Common myeloid progenitor, CD34-positive (primary cell): ENCODE measurements at regions of chr10 and their contacts with region 1.

Region 1: GRCh38 chr10:28381903-28382347 is 79.1 kb upstream of the MPP7 start:
- DNase-seq: peak; percentile 93 to 97 (median 96)
- H3K4me3 ChIP-seq: no peak overlapping the region
- H3K27ac ChIP-seq: no peak overlapping the region
- H3K4me1 ChIP-seq: peaks cover 0 to 9% (median 2%) of the 10 kb centered on the region in 4 experiments
- H3K27me3 ChIP-seq: no peaks in the 10 kb centered on the region

Region 2: GRCh38 chr10:28250782-28251181 is 131.1 kb before region 1 on chr10:
- CTCF ChIA-PET with region 1: interaction called, 72 read pairs
- POLR2A ChIA-PET with region 1: no interaction called
- DNase-seq: peak; percentile 25 to 51 (median 27)
- H3K4me3 ChIP-seq: no peak overlapping the region
- H3K27ac ChIP-seq: no peak overlapping the region
- H3K4me1 ChIP-seq: peaks cover 11 to 19% (median 14%) of the 10 kb centered on the region in 4 experiments
- H3K27me3 ChIP-seq: no peaks in the 10 kb centered on the region

Region 3: GRCh38 chr10:28326516-28327490 is 55.1 kb before region 1 on chr10:
- CTCF ChIA-PET with region 1: interaction called, 24 read pairs
- POLR2A ChIA-PET with region 1: no interaction called
- DNase-seq: peak in 2 of 3 donors; percentile 63 to 72
- H3K4me3 ChIP-seq: peak overlapping the region in 4 of 7 experiments; percentile 25 to 49 (median 36)
- H3K27ac ChIP-seq: peak overlapping the region in 1 of 2 experiments; percentile 36
- H3K4me1 ChIP-seq: peaks cover 23 to 50% (median 33%) of the 10 kb centered on the region in 4 experiments
- H3K27me3 ChIP-seq: no peaks in the 10 kb centered on the region

Region 4: DNA sequence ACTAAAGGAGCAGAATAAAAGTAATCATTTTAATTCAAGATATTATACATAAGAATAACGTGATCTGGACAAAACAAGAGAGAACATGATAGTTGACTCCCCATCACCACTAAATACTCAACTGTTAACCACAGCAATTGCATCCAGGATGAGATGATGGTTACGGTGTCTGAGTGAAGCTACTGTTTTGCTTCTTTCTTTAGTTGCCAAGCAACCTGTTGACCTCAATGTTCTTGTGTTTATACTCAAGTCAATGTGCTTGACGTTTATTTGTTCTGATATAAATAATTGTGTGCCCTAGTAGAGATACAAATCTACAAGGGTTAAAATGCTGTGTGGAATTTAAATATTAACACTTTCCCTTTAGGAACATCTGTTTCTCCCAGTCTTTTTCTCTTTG is 47.6 kb before region 1 on chr10:
- CTCF ChIA-PET with region 1: interaction called, 24 read pairs
- POLR2A ChIA-PET with region 1: no interaction called
- DNase-seq: peak; percentile 95 to 98 (median 97)
- H3K4me3 ChIP-seq: peak overlapping the region in 2 of 7 experiments; percentile 19 to 39
- H3K27ac ChIP-seq: peak overlapping the region; percentile 93 to 96
- H3K4me1 ChIP-seq: peaks cover 26 to 64% (median 47%) of the 10 kb centered on the region in 4 experiments
- H3K27me3 ChIP-seq: no peaks in the 10 kb centered on the region

Region 5: GRCh38 chr10:28367929-28368484 is 13.9 kb before region 1 on chr10:
- CTCF ChIA-PET with region 1: interaction called, 25 read pairs
- POLR2A ChIA-PET with region 1: no interaction called
- DNase-seq: peak; percentile 72 to 92 (median 90)
- H3K4me3 ChIP-seq: peak overlapping the region in 3 of 7 experiments; percentile 19 to 29 (median 23)
- H3K27ac ChIP-seq: peak overlapping the region; percentile 64 to 69
- H3K4me1 ChIP-seq: peaks cover 18 to 46% (median 26%) of the 10 kb centered on the region in 4 experiments
- H3K27me3 ChIP-seq: no peaks in the 10 kb centered on the region

Region 6: GRCh38 chr10:28393966-28394568 is 12.1 kb after region 1 on chr10:
- CTCF ChIA-PET with region 1: interaction called, 34 read pairs
- POLR2A ChIA-PET with region 1: no interaction called
- DNase-seq: peak; percentile 62 to 79 (median 73)
- H3K4me3 ChIP-seq: peak overlapping the region in 1 of 7 experiments; percentile 17
- H3K27ac ChIP-seq: no peak overlapping the region
- H3K4me1 ChIP-seq: peaks cover 0 to 5% (median 4%) of the 10 kb centered on the region in 4 experiments
- H3K27me3 ChIP-seq: no peaks in the 10 kb centered on the region

Region 7: DNA sequence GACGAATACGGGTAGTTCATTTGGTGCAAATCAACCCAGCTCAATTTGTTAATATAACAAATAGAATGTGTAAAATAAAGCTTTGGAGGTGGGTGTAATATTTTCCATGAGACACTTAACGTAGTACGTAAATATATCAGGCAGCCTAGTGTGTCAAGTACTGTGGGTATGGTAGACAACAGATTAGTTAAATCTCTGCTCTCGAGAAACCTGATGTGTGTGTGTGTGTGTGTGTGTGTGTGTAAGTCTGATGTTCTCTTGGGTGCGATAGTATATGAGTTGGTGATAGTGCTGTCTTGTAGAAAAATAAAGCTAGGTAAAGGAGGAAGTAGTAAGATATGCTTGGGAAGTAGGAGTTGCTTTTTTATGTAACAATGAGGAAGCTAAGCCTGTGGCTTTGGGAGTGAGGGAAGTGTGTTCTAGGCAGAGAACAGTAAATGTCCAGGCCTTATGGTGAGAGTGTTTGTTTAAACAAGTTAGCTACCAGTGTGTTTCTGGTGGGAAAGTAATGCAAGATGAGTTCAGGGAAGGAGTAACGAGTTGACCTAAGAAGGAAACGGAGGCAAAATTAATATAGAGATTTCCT is 177.1 kb after region 1 on chr10:
- CTCF ChIA-PET with region 1: no interaction called
- POLR2A ChIA-PET with region 1: no interaction called
- DNase-seq: peak; percentile 10 to 46 (median 21)
- H3K4me3 ChIP-seq: no peak overlapping the region
- H3K27ac ChIP-seq: no peak overlapping the region
- H3K4me1 ChIP-seq: peaks cover 7 to 17% (median 10%) of the 10 kb centered on the region in 4 experiments
- H3K27me3 ChIP-seq: no peaks in the 10 kb centered on the region